ENCODE measurements at regions of chr15 and their contacts with region 1.

Region 1: GRCh38 chr15:75809986-75810750 is 33.1 kb upstream of the UBE2Q2 start:
- DNase-seq: no peak
- ATAC-seq: peak; percentile 85
- H3K4me3 ChIP-seq: no peak overlapping the region
- H3K27ac ChIP-seq: no peak overlapping the region
- H3K4me1 ChIP-seq: no peaks in the 10 kb centered on the region
- H3K27me3 ChIP-seq: no peaks in the 10 kb centered on the region; a peak in 1 of 4 replicates
- CTCF ChIP-seq: peak; percentile 45 to 68 (median 55); a peak in 5 of 6 replicates
- EP300 ChIP-seq: no peak
- POLR2A ChIP-seq: no peak
- RAD21 ChIP-seq: peak; percentile 71

Region 2: DNA sequence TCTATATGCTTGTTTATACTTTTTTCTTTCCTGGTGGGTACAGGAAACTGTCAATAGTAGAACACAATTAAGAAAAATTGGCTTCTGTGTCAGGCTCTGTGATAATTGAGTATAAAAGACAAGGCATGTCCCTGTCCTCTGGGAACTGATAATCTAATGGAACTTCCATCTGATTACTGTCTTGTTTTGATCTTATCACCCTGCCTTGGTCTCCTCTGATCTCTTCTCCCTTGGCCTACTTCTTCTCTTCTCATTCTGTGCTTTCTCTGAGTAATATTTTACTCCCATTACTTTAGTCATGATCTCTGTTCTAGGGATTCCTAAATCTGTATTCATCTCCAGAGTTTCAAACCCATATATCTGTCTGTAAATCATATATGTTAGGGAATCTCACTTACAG is 47.7 kb after region 1 on chr15:
- CTCF ChIA-PET with region 1: no interaction called
- POLR2A ChIA-PET with region 1: no interaction called
- RAD21 ChIA-PET with region 1: no interaction called
- SMC1A ChIA-PET with region 1: no interaction called
- in situ Hi-C with region 1: no loop called
- intact Hi-C with region 1: no loop called
- DNase-seq: no peak
- ATAC-seq: no peak
- H3K4me3 ChIP-seq: no peak overlapping the region
- H3K27ac ChIP-seq: no peak overlapping the region
- H3K4me1 ChIP-seq: no peaks in the 10 kb centered on the region
- H3K27me3 ChIP-seq: no peaks in the 10 kb centered on the region
- CTCF ChIP-seq: no peak
- EP300 ChIP-seq: no peak
- POLR2A ChIP-seq: no peak
- RAD21 ChIP-seq: no peak

Region 3: DNA sequence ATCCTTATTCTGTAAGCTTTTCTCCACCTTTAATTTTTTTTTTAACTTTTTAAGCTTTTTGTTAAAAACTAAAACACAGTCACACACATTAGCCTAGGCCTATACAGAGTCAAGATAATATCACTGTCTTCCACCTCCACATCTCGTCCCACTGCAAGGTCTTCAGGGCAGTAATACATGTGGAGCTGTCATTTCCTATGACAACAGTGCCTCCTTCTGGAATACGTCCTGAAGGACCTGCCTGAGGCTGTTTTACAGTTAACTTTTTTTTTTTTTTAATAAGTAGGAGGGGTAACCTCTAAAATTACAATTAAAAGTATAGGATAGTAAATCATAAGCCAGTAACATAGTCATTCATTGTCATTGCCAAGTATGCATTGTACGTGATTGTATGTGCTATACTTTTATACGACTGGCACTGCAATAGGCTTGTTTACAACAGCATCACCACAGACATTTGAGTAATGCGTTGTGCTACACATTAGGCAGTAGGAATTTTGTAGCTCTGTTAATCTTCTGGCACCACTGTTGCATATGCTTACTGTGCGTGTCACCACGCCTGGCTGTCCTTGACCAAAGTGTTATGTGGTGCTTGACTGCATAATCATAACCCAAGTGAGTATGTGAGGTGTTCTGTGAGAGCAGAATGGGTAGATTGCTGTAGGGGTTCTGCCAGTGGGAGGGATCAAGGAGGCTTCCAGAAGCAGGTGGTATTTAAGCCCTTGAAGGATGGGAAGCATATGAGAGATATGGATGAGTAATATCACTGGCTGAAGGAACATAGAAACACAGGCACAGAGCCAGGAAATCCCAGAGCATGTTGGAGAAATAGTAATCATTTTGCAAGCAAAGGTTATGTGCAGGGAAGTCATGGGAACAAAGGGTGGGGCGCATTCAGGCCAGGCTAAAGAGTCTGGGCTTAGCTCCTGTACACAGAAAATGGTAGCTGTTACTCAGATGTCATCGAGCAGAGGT is 111.8 kb after region 1 on chr15:
- CTCF ChIA-PET with region 1: interaction called, 22 read pairs
- POLR2A ChIA-PET with region 1: interaction called, 4 read pairs
- RAD21 ChIA-PET with region 1: interaction called, 6 read pairs
- SMC1A ChIA-PET with region 1: interaction called, 12 read pairs
- in situ Hi-C with region 1: no loop called
- intact Hi-C with region 1: loop called (anchors 5 kb)
- DNase-seq: no peak
- ATAC-seq: peak; percentile 42; the same call in 2 of the 3 replicates
- H3K4me3 ChIP-seq: no peak overlapping the region
- H3K27ac ChIP-seq: no peak overlapping the region
- H3K4me1 ChIP-seq: peaks cover 4% of the 10 kb centered on the region; the same call in 1 of the 2 replicates
- H3K27me3 ChIP-seq: no peaks in the 10 kb centered on the region
- CTCF ChIP-seq: peak; percentile 18 to 29 (median 26); a peak in 4 of 6 replicates
- EP300 ChIP-seq: no peak
- POLR2A ChIP-seq: no peak
- RAD21 ChIP-seq: peak; percentile 55

Region 4: GRCh38 chr15:75928680-75929608 is 118.8 kb after region 1 on chr15:
- CTCF ChIA-PET with region 1: interaction called, 9 read pairs
- POLR2A ChIA-PET with region 1: no interaction called
- RAD21 ChIA-PET with region 1: no interaction called
- SMC1A ChIA-PET with region 1: interaction called, 6 read pairs
- in situ Hi-C with region 1: no loop called
- intact Hi-C with region 1: loop called (anchors 5 kb)
- DNase-seq: no peak
- ATAC-seq: peak; percentile 80
- H3K4me3 ChIP-seq: no peak overlapping the region
- H3K27ac ChIP-seq: no peak overlapping the region
- H3K4me1 ChIP-seq: peaks cover 7% of the 10 kb centered on the region
- H3K27me3 ChIP-seq: no peaks in the 10 kb centered on the region
- CTCF ChIP-seq: peak; percentile 39 to 54 (median 50); a peak in 5 of 6 replicates
- EP300 ChIP-seq: no peak
- POLR2A ChIP-seq: no peak
- RAD21 ChIP-seq: peak; percentile 74

Region 5: DNA sequence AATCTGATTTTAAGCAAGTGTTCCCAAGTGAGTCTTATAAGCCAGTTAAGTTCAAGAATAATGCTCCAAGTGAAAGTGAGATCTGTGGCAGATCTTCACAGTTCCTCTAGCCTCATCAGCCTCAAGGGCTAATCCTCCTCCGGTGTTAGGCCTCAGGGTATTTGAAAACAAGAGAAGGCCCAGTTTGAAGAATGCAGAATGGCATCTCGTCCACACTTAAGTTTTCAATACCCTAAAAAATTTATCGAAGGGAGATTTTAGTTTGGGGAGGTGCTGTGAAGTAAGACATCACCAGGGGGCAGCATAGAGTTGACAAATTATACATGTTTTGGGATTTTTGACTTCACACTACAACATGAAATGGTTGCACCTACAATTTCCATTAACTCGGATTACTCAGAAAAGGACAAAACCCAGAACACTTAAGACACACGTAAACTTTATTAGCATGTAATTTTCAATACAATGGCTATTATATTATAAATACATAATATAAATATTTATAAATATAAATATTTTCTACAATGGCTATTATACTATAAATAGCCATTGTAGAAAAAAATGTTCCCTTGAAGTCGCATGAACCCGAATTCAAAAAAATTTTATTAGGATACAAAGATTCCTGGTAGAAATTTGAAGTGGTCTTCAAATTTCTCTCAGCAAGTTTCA is 247.3 kb after region 1 on chr15:
- CTCF ChIA-PET with region 1: interaction called, 16 read pairs
- POLR2A ChIA-PET with region 1: no interaction called
- RAD21 ChIA-PET with region 1: interaction called, 6 read pairs
- SMC1A ChIA-PET with region 1: interaction called, 10 read pairs
- in situ Hi-C with region 1: no loop called
- intact Hi-C with region 1: no loop called
- DNase-seq: no peak
- ATAC-seq: peak; percentile 53
- H3K4me3 ChIP-seq: peak overlapping the region; percentile 22; the same call in 1 of the 2 replicates
- H3K27ac ChIP-seq: peak overlapping the region; percentile 63; the same call in 1 of the 2 replicates
- H3K4me1 ChIP-seq: peaks cover 28% of the 10 kb centered on the region
- H3K27me3 ChIP-seq: no peaks in the 10 kb centered on the region
- CTCF ChIP-seq: peak; percentile 60 to 70 (median 68)
- EP300 ChIP-seq: no peak
- POLR2A ChIP-seq: no peak
- RAD21 ChIP-seq: peak; percentile 58

Region 6: DNA sequence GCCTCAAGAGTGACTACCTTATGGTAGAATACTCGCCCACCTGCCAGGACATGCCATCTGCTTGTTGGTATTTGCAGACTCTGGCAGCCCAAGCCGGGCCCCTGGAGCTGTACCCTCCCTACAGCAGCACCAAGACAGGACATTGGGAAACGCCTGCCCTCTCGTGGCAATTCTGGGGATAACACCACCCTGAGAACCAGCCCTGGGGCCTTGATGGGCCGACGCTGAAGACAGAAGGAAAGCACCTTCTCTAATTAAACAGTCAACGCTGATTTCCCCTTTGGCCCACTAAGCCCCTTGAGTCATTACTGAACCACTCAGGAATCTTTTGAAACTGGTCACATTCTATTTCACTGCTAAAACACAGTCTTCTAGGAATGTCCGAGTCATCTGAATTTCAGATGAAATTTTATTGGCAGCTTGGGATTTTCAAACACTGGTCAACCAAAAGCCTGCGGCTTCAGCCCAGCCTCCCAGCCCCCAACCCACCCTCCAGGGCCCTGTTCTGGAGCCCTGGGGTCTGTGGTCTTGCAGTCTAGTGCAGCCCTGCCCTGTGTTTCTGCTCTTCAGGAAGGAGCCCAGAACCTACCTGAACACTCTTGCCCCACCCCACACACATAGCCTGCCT is 340.9 kb after region 1 on chr15:
- CTCF ChIA-PET with region 1: interaction called, 10 read pairs
- POLR2A ChIA-PET with region 1: no interaction called
- RAD21 ChIA-PET with region 1: interaction called, 3 read pairs
- SMC1A ChIA-PET with region 1: interaction called, 3 read pairs
- in situ Hi-C with region 1: no loop called
- intact Hi-C with region 1: no loop called
- DNase-seq: peak; percentile 77
- ATAC-seq: peak; percentile 98
- H3K4me3 ChIP-seq: 0 out of 2 replicates have a peak overlapping the region, but pooled peaks have one; percentile 7
- H3K27ac ChIP-seq: no peak overlapping the region
- H3K4me1 ChIP-seq: peaks cover 20% of the 10 kb centered on the region
- H3K27me3 ChIP-seq: 0 out of 4 replicates have a peak, but pooled peaks cover 0 to 2% of the 10 kb centered on the region in 2 experiments
- CTCF ChIP-seq: peak; percentile 86 to 90 (median 90); a peak in 5 of 6 replicates
- EP300 ChIP-seq: peak in 1 of 2 experiments; percentile 18; a peak in 1 of 4 replicates
- POLR2A ChIP-seq: no peak
- RAD21 ChIP-seq: peak; percentile 66

Measured in GM12878 (cell line).